ENCODE measurements at regions of chr9 and their contacts with region 1.

Region 1: DNA sequence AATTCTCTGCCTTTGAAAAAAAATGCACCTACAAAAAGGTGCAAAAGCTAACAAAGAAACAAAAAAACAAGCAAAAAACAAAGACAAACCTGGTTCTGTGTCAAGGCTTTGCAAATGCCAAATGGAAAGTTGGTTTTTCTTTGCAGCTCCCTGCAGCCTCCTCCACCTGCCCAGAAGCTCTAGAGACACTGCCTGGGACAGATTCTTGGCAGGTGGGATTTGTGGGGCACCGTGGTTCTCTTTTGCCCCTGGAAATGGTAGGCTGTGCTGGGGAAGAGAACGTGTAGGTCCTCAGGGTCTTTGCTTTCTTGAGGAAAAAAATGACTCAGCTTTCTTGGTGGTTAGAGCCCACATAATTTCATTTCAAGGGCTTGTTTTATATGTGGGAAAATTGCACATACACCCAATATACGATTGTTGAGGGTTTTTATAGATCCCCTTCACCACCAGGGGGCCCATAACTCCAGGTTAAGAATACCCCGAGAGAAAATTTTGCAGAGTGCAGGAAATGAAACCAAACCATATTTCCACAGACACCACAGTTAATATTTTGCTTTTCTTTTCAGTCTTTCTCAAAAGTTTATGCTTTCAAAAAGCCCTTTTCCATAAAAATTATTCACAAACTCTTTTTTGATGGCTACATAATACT is 58.7 kb downstream of the NXNL2 start:
- DNase-seq: peak; percentile 60
- CTCF ChIP-seq: peak; percentile 51

Region 2: GRCh38 chr9:88458716-88459465 is 134.8 kb before region 1 on chr9:
- in situ Hi-C with region 1: no loop called
- DNase-seq: no peak
- CTCF ChIP-seq: no peak

Region 3: DNA sequence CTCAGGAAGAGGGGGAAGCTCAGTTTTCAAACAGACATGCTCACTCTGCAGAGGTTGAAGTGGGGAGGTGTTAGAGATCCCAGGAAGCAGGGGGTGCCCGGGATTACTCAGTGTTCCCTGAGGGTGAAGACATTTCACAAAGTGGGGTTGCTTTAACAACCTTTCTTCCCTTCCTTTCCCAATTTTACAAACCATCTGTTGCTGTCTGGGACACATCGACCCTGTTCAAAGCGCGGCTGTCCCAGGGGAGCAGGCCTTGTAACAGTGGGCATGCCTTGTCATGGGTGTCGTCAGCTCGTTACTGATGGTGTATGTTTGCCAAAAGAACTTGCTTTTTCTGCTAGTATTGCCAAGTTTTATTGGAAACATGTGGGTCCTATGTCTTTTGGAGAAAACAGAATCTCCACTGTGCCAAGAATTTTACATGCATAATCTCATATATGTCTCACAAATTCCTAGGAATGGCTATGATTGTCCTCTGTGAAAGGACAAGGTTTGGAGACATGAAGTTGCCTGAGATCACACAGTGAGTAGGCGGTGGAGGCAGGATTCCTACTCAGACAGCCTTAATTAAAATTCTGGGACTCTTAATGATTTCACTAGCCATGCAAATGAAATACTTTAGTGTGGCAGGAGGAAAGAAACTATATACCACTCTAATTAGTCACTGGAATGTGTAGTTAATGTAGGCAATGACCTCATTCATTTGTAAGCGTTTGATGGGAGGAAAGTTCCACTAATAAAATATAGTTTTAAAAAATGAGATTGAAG is 140.2 kb after region 1 on chr9:
- in situ Hi-C with region 1: no loop called
- DNase-seq: no peak
- CTCF ChIP-seq: no peak

Region 4: DNA sequence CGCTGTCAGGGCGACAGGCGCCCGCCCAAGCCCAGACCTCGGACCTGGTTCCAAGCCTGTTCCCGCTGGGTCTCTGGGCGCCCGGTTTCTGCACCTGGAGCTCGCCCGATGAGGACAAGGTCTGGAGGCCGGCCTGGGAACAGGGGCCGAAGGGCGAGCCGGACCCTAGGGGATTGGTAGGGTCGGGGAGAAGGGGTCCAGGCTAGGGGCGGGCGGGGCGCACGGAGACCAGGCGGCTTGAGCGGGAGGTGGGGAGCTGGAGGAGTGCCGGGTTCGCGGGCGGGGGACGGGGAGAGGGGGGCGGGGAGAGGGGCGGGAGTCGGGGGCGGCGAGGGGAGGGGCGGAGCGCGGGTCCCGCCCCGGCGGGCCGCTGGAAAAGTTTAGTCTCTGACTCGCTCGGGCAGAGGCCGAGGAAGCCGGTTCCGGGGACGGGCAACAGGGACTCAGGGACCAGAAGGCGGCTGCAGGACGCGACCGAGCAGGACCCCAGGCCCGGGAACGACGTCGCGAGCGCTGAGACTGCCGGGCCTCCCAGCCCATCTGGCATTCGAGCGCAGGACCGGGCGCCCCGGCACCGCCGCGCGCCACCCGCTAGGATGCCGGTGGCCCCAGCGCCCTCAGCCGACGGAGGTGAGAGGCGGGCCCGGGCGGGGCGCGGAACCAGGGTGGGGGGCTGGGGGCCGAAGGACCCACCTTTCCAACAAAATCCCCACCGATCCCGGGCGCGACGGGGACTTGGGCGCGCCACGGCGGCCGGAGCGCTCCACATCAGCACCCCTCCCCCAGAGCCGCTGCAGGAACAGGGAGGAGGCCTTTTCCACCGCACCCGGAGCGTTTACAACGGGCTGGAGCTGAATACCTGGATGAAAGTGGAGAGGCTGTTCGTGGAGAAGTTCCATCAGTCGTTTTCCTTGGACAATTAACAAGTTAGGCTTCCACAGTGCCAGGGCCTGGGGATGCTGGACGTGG is 397.7 kb after region 1 on chr9 and contains the start of gene S1PR3:
- in situ Hi-C with region 1: loop called (anchors 10 kb)
- DNase-seq: peak; percentile 43
- CTCF ChIP-seq: no peak